ENCODE measurements at regions of chr19 and their contacts with region 1.

Region 1: GRCh38 chr19:18251587-18252369 is 22.5 kb downstream of the IQCN start:
- DNase-seq: no peak
- H3K4me3 ChIP-seq: no peak overlapping the region
- H3K27me3 ChIP-seq: peaks cover 5% of the 10 kb centered on the region
- CTCF ChIP-seq: peak; percentile 90

Region 2: DNA sequence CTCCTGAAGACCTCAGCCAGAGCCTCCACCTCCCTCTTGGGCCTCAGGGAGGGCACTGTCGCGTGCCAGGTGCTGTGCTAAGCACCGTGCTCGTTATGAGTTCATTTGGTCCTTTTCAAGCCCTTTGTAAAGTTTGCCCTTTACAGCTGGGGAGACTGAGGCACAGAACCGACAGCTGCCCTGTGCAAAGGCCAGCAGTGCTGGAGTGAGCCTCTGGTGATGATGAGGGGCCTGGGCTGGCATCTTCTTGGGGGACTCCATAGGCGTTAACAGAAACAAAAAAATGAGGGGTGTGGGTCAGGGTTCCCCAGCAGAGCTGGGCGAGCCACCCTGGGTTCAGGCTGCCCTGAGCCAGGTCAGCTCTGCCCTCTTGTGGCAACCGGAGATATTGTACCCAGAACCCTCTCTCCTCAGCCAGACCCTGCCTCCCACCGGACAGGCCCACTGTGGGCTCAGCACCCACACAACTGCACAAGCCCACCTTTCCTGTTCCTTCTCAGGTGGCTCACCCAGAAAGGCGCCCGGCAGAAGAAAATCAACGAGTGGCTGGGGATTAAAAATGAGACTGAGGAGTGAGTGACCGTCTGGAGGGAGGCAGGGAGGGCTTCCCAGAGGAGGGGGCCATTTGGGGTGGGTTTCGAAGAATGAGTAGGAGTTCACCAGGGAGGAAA is 83.7 kb before region 1 on chr19:
- CTCF ChIA-PET with region 1: interaction called, 14 read pairs
- POLR2A ChIA-PET with region 1: no interaction called
- DNase-seq: no peak
- H3K4me3 ChIP-seq: no peak overlapping the region
- H3K27me3 ChIP-seq: no peaks in the 10 kb centered on the region
- CTCF ChIP-seq: peak; percentile 80

Region 3: DNA sequence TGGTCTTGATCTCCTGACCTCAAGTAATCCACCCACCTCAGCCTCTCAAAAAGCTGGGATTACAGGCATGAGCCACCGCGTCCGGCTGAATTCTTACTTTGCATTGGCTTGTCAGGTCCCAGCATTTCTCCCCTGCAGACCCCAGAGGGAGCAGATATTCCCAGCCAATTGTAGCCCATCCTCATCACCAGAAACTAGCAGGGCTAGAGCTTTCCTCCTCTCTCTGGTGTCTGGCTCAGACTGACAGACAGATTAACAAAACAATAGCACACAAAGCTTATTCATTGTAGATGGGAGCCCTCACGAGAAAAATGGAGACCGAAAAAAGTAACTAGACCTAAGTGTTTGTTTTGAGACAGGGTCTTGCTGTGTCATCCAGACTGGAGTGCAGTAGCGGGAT is 66.2 kb before region 1 on chr19:
- CTCF ChIA-PET with region 1: interaction called, 49 read pairs
- POLR2A ChIA-PET with region 1: no interaction called
- DNase-seq: no peak
- H3K4me3 ChIP-seq: no peak overlapping the region
- H3K27me3 ChIP-seq: no peaks in the 10 kb centered on the region
- CTCF ChIP-seq: no peak

Region 4: DNA sequence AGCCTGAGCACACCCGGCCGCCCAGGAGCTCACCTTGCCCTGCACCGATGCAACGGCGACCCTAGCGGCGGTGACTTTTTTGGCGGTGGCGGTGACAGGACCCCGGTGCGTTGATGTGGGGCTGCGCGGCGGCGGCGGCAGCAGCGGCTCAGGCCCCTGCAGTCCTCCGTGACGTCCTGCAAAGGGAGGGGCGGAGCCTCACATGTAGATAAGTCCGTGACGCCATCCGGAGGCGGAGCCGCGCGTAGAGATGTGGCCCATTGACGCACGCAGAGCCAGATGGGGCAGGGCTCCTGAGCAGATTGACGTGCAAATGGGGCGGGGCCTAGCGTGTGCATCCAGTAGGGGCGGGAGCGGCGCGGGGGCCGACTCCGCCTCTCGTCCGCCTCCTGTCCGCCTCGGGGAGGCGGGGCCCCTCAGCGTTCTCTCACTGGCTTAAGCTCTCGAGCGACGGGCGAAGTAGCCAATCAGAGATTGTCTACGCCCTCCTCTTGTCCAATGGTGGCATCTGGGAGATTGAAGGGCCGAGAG is 47.9 kb before region 1 on chr19 and contains the start of gene RAB3A:
- CTCF ChIA-PET with region 1: interaction called, 109 read pairs
- POLR2A ChIA-PET with region 1: no interaction called
- DNase-seq: peak; percentile 100
- H3K4me3 ChIP-seq: peak within 1 kb of the TSS; percentile 64
- H3K27me3 ChIP-seq: no peaks in the 10 kb centered on the region
- CTCF ChIP-seq: no peak
- polyA plus RNA-seq, gene RAB3A: 1.4 and 2.0 TPM in 2 replicates

Region 5: GRCh38 chr19:18239303-18239702 is 12.5 kb before region 1 on chr19:
- CTCF ChIA-PET with region 1: interaction called, 13 read pairs
- POLR2A ChIA-PET with region 1: no interaction called
- DNase-seq: no peak
- H3K4me3 ChIP-seq: no peak overlapping the region
- H3K27me3 ChIP-seq: peaks cover 3% of the 10 kb centered on the region
- CTCF ChIP-seq: no peak

Measured in BJ (cell line).